ENCODE measurements at regions of chr2 and their contacts with region 1.

Region 1: DNA sequence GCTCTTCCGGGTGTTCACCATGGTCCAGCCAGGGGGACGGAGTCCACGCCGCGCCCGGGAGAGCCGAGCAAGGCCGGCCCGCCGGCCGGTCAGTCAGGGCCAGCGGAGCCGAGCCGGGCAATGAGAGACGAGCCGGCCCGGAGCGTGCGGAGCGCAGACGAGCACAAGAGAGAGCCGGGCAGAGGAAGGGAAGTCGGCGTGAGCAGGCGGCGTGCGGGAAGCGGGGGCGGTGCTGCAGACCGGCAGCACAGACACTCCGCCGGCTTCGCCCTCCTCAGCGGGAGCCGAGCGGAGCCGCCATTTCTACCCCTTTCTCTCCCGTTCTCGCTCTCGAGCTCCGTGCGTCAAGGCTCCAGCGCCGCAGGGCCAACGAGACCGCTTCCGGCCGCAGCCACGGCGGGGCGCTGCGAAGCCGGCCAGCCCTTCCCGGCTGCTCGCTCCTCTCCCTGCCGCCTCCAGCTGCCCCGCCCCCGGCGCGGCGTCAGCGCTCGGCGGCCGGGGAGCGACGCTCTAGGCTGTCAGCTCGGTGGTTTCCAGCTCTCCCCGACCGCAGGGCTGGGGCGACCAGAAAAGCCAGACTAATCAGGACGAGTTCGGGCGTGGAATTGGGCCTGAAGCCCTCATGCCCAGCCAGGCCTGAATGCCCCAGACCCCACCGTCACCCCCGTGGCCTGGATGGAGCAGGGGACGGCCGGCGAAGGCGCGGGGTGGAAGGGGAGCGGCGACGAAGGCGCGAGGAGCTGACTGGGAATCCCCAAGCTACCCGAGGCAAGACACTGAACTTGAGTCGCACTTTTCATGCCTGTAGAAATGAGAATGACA is at the start of gene ATAD2B:
- DNase-seq: peak; percentile 95
- H3K4me3 Mint-ChIP-seq: peak within 1 kb of the TSS; percentile 96
- H3K27ac Mint-ChIP-seq: peak within 1 kb of the TSS; percentile 94
- H3K4me1 Mint-ChIP-seq: peaks cover 34% of the 10 kb centered on the region
- H3K27me3 Mint-ChIP-seq: peaks cover 6% of the 10 kb centered on the region
- total RNA-seq, gene ATAD2B: 17.6 to 19.5 TPM

Region 2: GRCh38 chr2:23767876-23768621 is 158.9 kb before region 1 on chr2:
- CTCF ChIA-PET with region 1: no interaction called
- POLR2A ChIA-PET with region 1: no interaction called
- DNase-seq: no peak
- H3K4me3 Mint-ChIP-seq: no peak overlapping the region
- H3K27ac Mint-ChIP-seq: no peak overlapping the region
- H3K4me1 Mint-ChIP-seq: no peaks in the 10 kb centered on the region
- H3K27me3 Mint-ChIP-seq: no peaks in the 10 kb centered on the region

Region 3: GRCh38 chr2:23900927-23901322 is 26.0 kb before region 1 on chr2:
- CTCF ChIA-PET with region 1: no interaction called
- POLR2A ChIA-PET with region 1: interaction called, 11 read pairs
- DNase-seq: no peak
- H3K4me3 Mint-ChIP-seq: no peak overlapping the region
- H3K27ac Mint-ChIP-seq: no peak overlapping the region
- H3K4me1 Mint-ChIP-seq: peaks cover 9% of the 10 kb centered on the region
- H3K27me3 Mint-ChIP-seq: no peaks in the 10 kb centered on the region

Region 4: GRCh38 chr2:23993736-23994269 is 66.8 kb after region 1 on chr2:
- CTCF ChIA-PET with region 1: no interaction called
- POLR2A ChIA-PET with region 1: no interaction called
- DNase-seq: no peak
- H3K4me3 Mint-ChIP-seq: no peak overlapping the region
- H3K27ac Mint-ChIP-seq: no peak overlapping the region
- H3K4me1 Mint-ChIP-seq: no peaks in the 10 kb centered on the region
- H3K27me3 Mint-ChIP-seq: no peaks in the 10 kb centered on the region

Region 5: DNA sequence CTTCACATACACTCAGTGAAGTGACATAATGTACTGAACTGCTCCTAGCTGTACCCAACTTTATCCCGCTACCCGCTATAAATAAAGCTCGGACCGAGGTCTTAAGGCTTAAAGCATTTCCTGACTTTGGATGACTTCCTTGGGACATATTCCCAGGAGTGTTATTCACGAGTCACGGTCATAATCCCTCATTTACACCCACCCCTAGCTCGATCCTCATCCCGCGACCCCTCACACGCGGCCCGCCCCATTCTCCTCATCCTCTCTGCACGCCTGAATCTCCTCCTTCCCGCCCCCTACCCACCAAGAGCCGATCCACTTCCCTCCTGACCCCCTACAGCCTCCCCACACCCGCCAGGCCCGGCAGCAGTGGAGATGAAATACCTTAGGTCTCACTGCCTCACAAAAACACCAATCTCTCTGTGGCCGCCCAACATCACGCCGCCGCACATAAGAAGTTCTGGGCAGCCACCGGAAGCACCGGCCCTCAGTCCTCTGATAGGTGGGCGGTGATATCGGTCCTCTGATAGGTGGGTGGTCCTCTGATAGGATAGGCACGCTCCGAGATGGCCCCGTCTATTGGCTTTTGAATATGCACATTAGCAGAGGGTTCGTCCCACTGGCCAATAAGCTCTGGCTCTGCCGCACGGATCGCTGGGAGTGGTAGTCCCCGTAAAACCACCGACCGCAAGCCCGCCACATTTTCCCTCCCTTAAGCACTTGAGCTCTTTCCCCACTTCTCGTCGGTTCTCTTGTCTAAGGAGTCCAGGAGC is 120.2 kb after region 1 on chr2 and contains the start of gene WDCP:
- CTCF ChIA-PET with region 1: interaction called, 20 read pairs
- POLR2A ChIA-PET with region 1: interaction called, 35 read pairs
- DNase-seq: peak; percentile 96
- H3K4me3 Mint-ChIP-seq: peak within 1 kb of the TSS; percentile 96
- H3K27ac Mint-ChIP-seq: peak within 1 kb of the TSS; percentile 85
- H3K4me1 Mint-ChIP-seq: peaks cover 41% of the 10 kb centered on the region
- H3K27me3 Mint-ChIP-seq: peaks cover 2% of the 10 kb centered on the region
- total RNA-seq, gene WDCP: 18.5 to 19.1 TPM

Region 6: DNA sequence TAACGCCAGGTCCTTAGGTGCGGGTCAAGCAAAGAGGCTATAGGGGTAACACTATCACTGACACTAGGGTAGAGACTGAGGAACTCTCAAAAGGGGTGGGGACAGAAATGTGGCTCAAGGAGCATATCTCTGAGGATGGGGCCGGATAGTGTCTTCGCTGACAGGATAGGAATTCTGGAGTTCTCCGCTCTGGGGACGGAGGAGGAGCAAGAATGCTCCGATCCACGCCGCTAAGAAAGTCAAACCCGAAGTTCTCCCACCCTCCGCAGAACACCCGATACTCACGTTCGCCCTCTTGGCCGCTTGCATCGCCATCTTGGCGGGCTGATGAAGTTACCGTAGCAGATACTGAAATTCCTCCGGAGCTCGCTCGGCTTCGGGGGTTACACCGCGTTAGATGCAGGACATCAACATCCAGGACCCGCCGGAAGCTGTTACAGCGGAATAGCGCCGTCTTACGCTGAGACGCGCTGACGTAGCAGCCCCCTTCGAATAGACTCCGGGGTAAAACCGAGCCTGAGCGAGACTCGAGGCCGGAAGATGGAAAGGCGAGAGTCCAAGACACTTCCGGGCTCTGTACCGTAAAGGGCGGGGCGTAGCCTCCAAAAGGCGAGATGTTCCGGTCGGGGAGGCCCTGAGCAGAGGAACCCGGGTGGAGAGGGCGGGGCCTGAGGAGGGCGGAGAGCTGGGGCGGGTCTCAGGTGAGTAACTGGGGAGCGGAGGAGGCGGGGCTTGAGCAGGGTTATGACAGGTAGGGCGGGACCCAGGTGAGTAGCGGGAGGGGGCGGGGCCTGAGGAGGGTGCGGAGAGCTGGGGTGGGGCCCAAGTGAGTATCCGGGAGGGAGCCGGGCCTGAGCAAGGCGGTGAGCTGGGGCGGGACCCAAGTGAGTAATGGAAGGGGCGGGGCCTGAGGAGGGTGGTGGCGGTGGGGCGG is 149.2 kb after region 1 on chr2 and contains the start of gene SF3B6:
- CTCF ChIA-PET with region 1: interaction called, 22 read pairs
- POLR2A ChIA-PET with region 1: interaction called, 64 read pairs
- DNase-seq: peak; percentile 100
- H3K4me3 Mint-ChIP-seq: peak within 1 kb of the TSS; percentile 98
- H3K27ac Mint-ChIP-seq: peak within 1 kb of the TSS; percentile 96
- H3K4me1 Mint-ChIP-seq: peaks cover 38% of the 10 kb centered on the region
- H3K27me3 Mint-ChIP-seq: no peaks in the 10 kb centered on the region
- total RNA-seq, gene SF3B6: 87.4 to 88.2 TPM

Region 7: DNA sequence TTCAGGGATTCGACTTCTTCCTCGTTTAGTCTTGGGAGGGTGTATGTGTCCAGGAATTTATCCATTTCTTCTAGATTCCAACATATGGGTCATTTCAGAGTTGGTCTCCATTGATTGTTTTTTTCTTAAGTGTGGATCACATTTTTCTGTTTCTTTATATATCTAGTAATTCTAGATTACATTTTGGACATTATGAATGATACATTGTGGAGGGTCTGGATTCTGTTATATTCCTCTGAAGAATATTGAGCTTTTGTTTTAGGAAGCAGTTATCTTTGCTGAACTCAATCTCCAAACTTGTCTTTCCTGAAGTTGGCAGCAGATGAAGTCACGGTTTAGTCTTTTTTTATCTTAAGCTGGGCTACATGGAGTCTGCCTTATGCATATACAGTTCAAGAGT is 205.6 kb after region 1 on chr2:
- CTCF ChIA-PET with region 1: no interaction called
- POLR2A ChIA-PET with region 1: no interaction called
- DNase-seq: no peak
- H3K4me3 Mint-ChIP-seq: no peak overlapping the region
- H3K27ac Mint-ChIP-seq: no peak overlapping the region
- H3K4me1 Mint-ChIP-seq: no peaks in the 10 kb centered on the region
- H3K27me3 Mint-ChIP-seq: peaks cover 7% of the 10 kb centered on the region